Natural killer cell (primary cell): ENCODE measurements at regions of chr17 and their contacts with region 1.

Region 1: DNA sequence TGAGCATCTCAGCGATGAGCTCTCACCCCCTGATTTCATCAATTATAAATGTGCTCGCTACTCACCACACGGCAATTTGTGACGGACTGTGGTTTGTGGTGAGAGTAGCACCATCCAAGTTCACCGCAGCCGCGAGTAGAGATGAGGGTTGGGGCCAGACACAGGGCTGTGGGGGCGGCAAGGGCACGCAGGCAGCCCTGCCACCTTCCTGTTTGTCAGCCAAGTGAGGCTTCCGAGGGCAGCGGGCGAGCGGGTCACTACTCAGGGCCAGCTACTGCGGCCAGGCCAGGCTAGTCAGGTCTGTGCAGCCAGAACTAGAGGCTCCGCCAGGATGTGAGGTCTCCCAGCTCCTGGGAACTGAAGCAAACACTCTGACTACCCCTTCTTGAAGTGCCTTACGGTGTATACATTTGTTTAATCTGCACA is 39.6 kb upstream of the MEOX1 start:
- DNase-seq: peak; percentile 70 to 75
- ATAC-seq: peak; percentile 88 to 98 (median 89)
- H3K4me3 ChIP-seq: no peak overlapping the region
- H3K4me3 Mint-ChIP-seq: peak overlapping the region; percentile 73
- H3K27ac ChIP-seq: no peak overlapping the region
- H3K27ac Mint-ChIP-seq: peak overlapping the region; percentile 73 to 74
- H3K4me1 ChIP-seq: peaks cover 35% of the 10 kb centered on the region
- H3K4me1 Mint-ChIP-seq: peaks cover 37 to 38% of the 10 kb centered on the region in 2 donors
- H3K27me3 ChIP-seq: peaks cover 15% of the 10 kb centered on the region
- H3K27me3 Mint-ChIP-seq: peaks cover 49 to 64% of the 10 kb centered on the region in 2 donors
- CTCF ChIP-seq: no peak

Region 2: DNA sequence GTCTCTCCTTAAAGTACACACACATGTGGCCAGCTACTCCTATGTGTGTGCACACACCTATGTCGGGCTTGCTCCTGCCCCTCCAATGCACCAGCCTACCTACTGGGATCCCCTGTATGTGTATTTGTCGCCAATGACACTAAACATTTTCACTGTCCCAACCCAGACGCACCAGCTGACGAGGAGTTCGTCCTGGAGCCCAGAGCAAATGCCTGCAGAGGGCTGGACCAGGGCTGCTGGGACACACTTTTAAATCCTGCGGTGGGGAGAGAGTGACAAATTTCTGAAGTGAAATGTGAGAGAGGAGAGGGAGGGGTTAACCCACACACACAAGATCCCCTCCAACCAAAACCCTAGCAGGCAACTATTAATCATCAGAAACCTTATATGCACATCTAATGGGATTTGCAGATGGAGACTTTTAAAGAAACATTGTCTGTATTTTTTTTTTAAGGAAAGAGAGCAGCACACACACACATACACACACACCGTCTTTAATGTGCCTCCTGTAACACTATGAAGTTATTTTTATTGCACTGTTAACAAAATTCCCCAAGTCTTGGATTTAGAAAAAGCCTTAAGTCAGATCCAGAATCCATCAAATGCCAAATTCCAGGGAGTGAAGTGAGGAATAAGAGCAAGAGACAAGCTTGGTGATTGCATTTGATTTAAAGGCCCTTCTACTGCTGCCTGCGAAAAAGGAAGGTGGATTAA is 39.5 kb before region 1 on chr17 and contains the start of gene MEOX1:
- intact Hi-C with region 1: no loop called
- DNase-seq: no peak
- ATAC-seq: no peak
- H3K4me3 ChIP-seq: no peak within 1 kb of the TSS
- H3K4me3 Mint-ChIP-seq: no peak within 1 kb of the TSS
- H3K27ac ChIP-seq: no peak within 1 kb of the TSS
- H3K27ac Mint-ChIP-seq: no peak within 1 kb of the TSS
- H3K4me1 ChIP-seq: peaks cover 20% of the 10 kb centered on the region
- H3K4me1 Mint-ChIP-seq: peaks cover 0 to 9% of the 10 kb centered on the region in 2 donors
- H3K27me3 ChIP-seq: no peaks in the 10 kb centered on the region
- H3K27me3 Mint-ChIP-seq: peaks cover 0 to 3% of the 10 kb centered on the region in 2 donors
- CTCF ChIP-seq: no peak
- total RNA-seq, gene MEOX1: 0.18 TPM in 1 of 3 donors, not detected in the others

Region 3: DNA sequence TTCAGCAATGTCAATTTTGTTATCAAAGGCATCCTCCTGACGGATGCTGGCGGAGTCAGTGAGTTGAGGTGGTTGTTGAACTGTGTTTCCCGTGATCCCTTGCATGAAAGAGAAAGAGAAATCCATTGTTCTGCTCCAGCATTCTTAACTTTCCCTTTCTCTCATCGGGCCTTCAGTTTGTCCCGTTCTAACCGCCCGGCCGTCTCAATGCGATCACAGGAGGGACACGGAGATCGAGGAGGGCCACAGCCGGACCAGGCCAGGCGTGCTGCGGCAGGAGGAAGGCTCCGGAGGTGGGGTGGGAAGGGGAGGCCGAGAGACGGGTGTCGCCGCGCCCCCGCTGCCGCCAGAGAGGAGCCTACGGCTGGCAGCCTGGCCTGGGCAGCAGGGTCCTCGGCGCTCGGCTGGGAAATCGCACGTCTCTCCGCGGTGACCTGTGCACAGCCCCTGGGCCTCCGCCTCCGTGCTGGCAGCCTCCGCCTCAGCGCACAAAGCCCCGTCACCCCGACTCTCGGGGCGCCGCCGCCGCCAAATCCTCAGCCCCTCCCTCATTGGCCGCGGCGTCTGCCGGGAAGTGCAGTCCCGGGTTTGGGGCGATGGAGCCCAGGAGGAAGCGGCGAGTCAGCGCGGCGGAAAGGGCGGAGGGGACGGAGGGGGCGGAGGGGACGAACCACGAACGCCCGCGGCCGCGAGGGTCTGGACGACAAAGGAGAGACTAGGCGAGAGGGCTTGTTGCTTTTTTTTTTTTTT is 19.2 kb after region 1 on chr17:
- intact Hi-C with region 1: loop called (anchors 2 kb)
- DNase-seq: peak; percentile 65 to 82
- ATAC-seq: peak; percentile 89 to 94 (median 93)
- H3K4me3 ChIP-seq: peak overlapping the region; percentile 62
- H3K4me3 Mint-ChIP-seq: peak overlapping the region; percentile 95
- H3K27ac ChIP-seq: peak overlapping the region; percentile 79
- H3K27ac Mint-ChIP-seq: peak overlapping the region; percentile 6 to 91
- H3K4me1 ChIP-seq: peaks cover 4% of the 10 kb centered on the region
- H3K4me1 Mint-ChIP-seq: peaks cover 12% of the 10 kb centered on the region in 2 donors
- H3K27me3 ChIP-seq: peaks cover 4% of the 10 kb centered on the region
- H3K27me3 Mint-ChIP-seq: peaks cover 19 to 25% of the 10 kb centered on the region in 2 donors
- CTCF ChIP-seq: no peak

Region 4: DNA sequence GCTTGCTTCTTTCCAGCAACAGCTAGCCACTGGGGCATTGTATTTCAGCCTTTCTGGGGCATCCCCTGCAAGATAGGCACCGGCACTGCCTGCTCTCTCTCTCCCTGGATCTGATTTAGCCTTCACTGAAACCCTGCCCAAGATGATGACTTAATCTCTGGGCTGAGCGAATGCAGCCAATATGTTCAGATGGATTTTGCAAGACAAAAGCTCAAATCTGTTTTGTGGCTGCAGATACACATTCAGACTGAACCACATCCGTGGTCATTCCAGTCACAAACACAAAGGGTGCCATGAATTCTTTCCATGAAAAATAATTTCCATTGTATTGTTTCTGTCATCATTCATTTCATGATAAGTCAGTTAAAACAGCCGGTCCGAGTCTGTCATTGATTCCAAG is 33.0 kb after region 1 on chr17:
- intact Hi-C with region 1: no loop called
- DNase-seq: no peak
- ATAC-seq: no peak
- H3K4me3 ChIP-seq: no peak overlapping the region
- H3K4me3 Mint-ChIP-seq: no peak overlapping the region
- H3K27ac ChIP-seq: no peak overlapping the region
- H3K27ac Mint-ChIP-seq: no peak overlapping the region
- H3K4me1 ChIP-seq: no peaks in the 10 kb centered on the region
- H3K4me1 Mint-ChIP-seq: no peaks in the 10 kb centered on the region
- H3K27me3 ChIP-seq: no peaks in the 10 kb centered on the region
- H3K27me3 Mint-ChIP-seq: peaks cover 15 to 24% of the 10 kb centered on the region in 2 donors
- CTCF ChIP-seq: no peak

Region 5: DNA sequence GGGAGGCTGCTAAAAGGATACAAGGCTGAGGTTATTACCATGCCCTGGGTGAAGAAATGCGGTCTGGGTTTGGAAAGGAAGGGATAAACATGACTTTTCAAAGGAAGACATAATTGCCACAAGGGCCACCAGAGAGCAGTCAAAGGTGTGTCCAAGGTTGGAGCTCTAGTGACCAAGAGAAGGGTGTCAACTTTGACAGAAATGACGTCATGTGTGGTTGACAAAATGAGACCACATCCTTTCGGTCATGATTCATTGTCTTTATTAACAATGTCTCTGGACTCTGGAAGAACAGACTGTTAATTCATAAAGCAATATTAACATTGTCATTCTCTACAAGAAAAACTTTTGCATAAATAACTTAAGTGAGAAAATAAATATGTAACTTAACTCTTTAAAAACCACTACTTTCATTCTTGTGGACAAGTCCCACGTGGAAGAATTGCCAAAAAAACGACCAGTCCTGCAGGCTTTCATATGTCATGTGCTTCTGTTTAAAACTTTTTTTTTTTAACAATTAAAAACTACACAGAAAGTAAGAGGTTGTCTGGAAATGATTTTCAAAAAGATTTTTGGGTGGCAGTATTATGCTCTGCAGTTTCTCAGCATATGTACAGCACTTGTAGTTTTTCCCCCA is 52.3 kb after region 1 on chr17:
- intact Hi-C with region 1: loop called (anchors 1 kb)
- DNase-seq: peak in 1 of 2 donors; percentile 51
- ATAC-seq: peak; percentile 66 to 85 (median 85)
- H3K4me3 ChIP-seq: no peak overlapping the region
- H3K4me3 Mint-ChIP-seq: peak overlapping the region; percentile 45
- H3K27ac ChIP-seq: no peak overlapping the region
- H3K27ac Mint-ChIP-seq: peak overlapping the region; percentile 9 to 82
- H3K4me1 ChIP-seq: peaks cover 57% of the 10 kb centered on the region
- H3K4me1 Mint-ChIP-seq: peaks cover 30 to 41% of the 10 kb centered on the region in 2 donors
- H3K27me3 ChIP-seq: peaks cover 36% of the 10 kb centered on the region
- H3K27me3 Mint-ChIP-seq: peaks cover 37 to 56% of the 10 kb centered on the region in 2 donors
- CTCF ChIP-seq: no peak

Region 6: DNA sequence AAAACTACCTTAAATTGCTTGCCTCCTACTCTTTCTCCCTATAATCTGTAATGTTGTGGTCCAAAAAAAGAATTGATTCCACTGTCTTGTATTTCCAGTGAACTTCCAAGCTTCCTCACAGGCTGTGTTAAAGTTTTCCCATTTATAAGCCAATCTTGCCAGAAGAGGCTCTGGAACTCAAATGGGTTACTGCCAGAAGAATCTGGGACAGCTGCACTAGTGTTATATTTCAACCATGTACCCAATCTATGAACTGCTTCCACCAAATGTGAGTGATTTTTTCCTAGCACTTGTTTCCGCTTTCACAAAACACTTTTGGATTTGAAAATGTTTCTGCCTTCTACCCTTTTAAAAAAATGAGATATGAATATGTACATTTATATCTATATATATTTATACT is 986.4 kb after region 1 on chr17:
- intact Hi-C with region 1: no loop called
- DNase-seq: no peak
- ATAC-seq: no peak
- H3K4me3 ChIP-seq: no peak overlapping the region
- H3K4me3 Mint-ChIP-seq: no peak overlapping the region
- H3K27ac ChIP-seq: no peak overlapping the region
- H3K27ac Mint-ChIP-seq: no peak overlapping the region
- H3K4me1 ChIP-seq: peaks cover 16% of the 10 kb centered on the region
- H3K4me1 Mint-ChIP-seq: peaks cover 19 to 25% of the 10 kb centered on the region in 2 donors
- H3K27me3 ChIP-seq: no peaks in the 10 kb centered on the region
- H3K27me3 Mint-ChIP-seq: no peaks in the 10 kb centered on the region
- CTCF ChIP-seq: no peak